ENCODE measurements at regions of chr17 and their contacts with region 1.

Region 1: GRCh38 chr17:30939051-30939689 is 17.4 kb downstream of the ADAP2 start:
- DNase-seq: no peak
- ATAC-seq: peak; percentile 77
- H3K4me3 Mint-ChIP-seq: peak overlapping the region; percentile 64
- H3K27ac Mint-ChIP-seq: peak overlapping the region; percentile 86
- H3K4me1 Mint-ChIP-seq: peaks cover 13% of the 10 kb centered on the region
- H3K27me3 Mint-ChIP-seq: no peaks in the 10 kb centered on the region
- CTCF ChIP-seq: no peak

Region 2: DNA sequence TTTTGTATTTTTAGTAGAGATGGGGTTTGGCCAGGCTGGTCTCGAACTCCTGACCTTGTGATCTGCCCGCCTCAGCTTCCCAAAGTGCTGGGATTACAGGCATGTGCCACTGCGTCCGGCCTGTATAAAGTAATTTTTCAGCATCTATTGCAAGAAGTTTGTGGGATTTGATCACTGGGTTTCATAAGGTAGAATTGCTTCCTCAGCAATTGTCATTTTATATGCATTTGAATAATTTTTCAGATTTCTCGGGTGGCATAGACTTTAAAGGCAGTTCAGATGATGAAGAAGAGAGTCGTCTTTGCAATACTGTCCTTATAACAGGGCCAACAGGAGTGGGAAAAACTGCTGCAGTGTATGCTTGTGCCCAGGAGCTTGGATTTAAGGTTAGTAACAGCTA is 70.2 kb before region 1 on chr17:
- CTCF ChIA-PET with region 1: no interaction called
- POLR2A ChIA-PET with region 1: no interaction called
- intact Hi-C with region 1: no loop called
- DNase-seq: no peak
- ATAC-seq: no peak
- H3K4me3 Mint-ChIP-seq: no peak overlapping the region
- H3K27ac Mint-ChIP-seq: no peak overlapping the region
- H3K4me1 Mint-ChIP-seq: no peaks in the 10 kb centered on the region
- H3K27me3 Mint-ChIP-seq: no peaks in the 10 kb centered on the region
- CTCF ChIP-seq: no peak

Region 3: DNA sequence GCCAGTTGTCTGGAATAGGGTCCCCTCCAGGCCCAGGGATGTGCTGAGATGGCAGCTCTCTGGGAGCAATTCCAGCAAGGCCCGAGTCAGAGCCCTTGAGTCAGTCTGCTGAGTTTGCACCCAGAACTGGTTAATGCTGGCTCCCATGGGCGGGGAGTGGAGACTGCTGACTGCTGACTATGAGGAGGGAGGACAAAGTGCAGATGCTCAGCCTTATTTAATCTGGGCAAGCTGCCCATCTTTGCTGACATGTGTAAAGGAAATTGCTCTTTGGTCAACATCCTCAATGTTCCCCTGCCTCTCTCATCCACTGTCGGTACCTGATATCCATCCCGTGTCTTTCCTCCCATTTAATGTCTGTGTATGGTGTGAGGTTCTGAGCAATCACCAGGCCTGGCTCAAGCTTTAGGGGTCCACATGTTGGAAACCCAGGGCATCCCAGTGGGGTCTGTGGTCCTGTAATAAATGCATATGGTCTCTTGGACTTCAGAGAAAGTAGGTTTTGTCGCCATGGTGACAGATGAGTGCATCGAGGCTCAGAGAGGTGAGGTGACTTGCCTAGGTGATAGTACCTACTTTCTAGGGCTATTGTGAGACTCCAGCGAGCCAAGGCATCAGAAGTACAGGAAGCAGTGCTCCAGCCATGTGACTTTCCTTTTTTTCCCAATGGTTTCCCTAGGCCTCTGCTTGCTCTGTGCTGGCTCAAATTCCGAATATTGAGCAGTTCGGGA is 11.7 kb after region 1 on chr17:
- CTCF ChIA-PET with region 1: interaction called, 3 read pairs
- POLR2A ChIA-PET with region 1: interaction called, 18 read pairs
- intact Hi-C with region 1: loop called (anchors 1 kb)
- DNase-seq: no peak
- ATAC-seq: no peak
- H3K4me3 Mint-ChIP-seq: no peak overlapping the region
- H3K27ac Mint-ChIP-seq: peak overlapping the region; percentile 63
- H3K4me1 Mint-ChIP-seq: peaks cover 50% of the 10 kb centered on the region
- H3K27me3 Mint-ChIP-seq: no peaks in the 10 kb centered on the region
- CTCF ChIP-seq: no peak